Naive thymus-derived CD4-positive, alpha-beta T cell (primary cell): ENCODE measurements at regions of chr12 and their contacts with region 1.

Region 1: DNA sequence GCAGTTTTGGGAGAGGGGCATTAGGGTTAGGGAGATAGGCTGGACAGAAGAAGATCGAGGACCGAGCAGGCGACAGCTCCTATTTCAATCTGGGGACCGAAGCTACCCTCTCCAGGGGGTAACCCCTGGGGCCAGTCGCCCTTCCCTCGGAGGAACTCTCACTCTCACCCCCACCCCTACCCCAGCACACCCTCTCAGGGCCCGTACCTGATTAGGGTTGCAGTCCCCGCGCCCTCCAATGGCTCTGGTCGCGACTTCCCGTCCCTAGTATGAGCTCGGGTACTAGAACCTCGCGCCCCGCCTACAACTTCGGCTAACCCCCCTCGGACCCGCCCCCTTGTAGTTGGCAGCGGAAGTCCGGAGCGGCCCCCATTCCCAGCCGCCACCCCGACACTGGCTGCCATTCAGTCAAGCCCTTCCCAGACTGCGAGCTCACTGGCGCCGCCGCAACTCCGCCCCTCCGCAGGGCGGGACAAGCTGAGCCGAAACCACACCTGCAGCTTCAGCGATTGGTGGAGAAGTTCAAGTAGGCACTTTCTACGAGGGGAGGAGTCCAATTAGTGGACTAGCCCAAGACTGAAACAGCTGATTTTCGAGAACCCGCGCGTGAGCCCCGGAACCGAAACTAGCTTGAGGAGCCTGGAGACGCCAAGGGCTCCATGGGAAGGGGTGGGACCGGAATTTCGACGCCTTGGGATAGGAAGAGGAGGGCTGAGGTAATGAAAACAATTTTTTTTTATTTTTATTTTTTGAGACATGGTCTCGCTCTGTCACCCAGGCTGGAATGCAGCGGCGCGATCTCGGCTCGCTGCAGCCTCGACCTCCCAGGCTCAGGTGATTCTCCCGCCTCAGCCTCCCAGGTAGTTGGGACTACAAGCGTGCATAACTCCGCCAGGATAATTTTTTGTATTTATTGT is at the start of gene STAT2:
- DNase-seq: peak; percentile 94 to 100 (median 99)
- ATAC-seq: peak; percentile 97
- H3K4me3 ChIP-seq: peak within 1 kb of the TSS; percentile 89
- H3K4me3 Mint-ChIP-seq: peak within 1 kb of the TSS; percentile 83 to 99 (median 96)
- H3K27ac ChIP-seq: peak within 1 kb of the TSS; percentile 79
- H3K27ac Mint-ChIP-seq: peak within 1 kb of the TSS; percentile 90 to 98 (median 96)
- H3K4me1 ChIP-seq: peaks cover 16 to 17% of the 10 kb centered on the region in 2 donors
- H3K4me1 Mint-ChIP-seq: peaks cover 14 to 40% (median 27%) of the 10 kb centered on the region in 7 donors
- H3K27me3 ChIP-seq: no peaks in the 10 kb centered on the region
- H3K27me3 Mint-ChIP-seq: no peaks in the 10 kb centered on the region
- total RNA-seq, gene STAT2: 119 to 291 (median 182) TPM

Region 2: DNA sequence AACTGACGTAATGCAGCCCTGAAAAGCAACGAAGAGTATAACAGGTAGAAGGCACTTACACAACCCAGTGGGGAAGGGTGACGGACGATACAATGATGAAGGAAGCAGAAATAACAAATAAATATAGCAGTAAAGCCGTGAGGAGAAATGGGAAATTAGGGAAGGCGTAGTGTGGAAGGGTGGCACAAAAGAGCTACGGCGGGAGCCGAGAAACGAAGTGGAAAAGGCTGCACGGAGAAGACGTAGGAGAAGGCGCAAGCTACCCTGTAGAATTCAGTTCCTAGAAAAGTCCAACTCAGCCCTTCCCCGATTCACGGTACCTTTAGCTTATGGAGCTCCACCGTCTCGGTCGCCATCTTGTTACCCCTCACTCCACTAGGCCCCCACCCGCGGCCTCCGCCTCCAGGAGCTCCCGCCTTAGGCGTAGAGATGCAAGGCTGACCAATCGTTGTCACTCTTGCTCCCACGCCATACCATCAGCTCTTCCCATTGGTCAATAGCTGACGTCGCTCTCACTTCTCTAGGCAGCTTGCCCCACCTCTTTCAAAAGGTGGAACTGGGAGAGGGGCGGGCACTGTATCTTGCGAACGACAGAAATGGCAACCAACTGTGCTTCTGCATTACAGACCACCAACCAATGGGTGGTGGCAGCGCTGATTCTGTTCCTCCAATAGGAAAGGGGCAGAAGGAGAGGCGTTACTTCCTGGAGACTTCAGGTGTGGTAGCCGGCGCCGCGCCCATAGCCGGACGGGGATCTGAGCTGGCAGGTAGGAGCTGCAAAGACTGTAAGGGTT is 542.6 kb before region 1 on chr12 and contains the starts of genes ORMDL2 and SARNP:
- CTCF ChIA-PET with region 1: no interaction called
- POLR2A ChIA-PET with region 1: no interaction called
- intact Hi-C with region 1: loop called in 1 of 2 experiments (anchors 1 kb)
- DNase-seq: peak; percentile 81 to 99 (median 98)
- ATAC-seq: peak; percentile 96
- H3K4me3 ChIP-seq: peak within 1 kb of the TSS; percentile 94
- H3K4me3 Mint-ChIP-seq: no peak within 1 kb of the TSS
- H3K27ac ChIP-seq: peak within 1 kb of the TSS; percentile 88
- H3K27ac Mint-ChIP-seq: no peak within 1 kb of the TSS
- H3K4me1 ChIP-seq: peaks cover 22 to 41% of the 10 kb centered on the region in 2 donors
- H3K4me1 Mint-ChIP-seq: peaks cover 32 to 45% (median 37%) of the 10 kb centered on the region in 7 donors
- H3K27me3 ChIP-seq: no peaks in the 10 kb centered on the region
- H3K27me3 Mint-ChIP-seq: no peaks in the 10 kb centered on the region
- total RNA-seq, gene ORMDL2: 12.3 to 67.3 (median 40.5) TPM
- total RNA-seq, gene SARNP: 28.0 to 73.0 (median 41.7) TPM

Region 3: GRCh38 chr12:56158029-56158925 is 201.8 kb before region 1 on chr12 and contains the start of gene MYL6:
- CTCF ChIA-PET with region 1: no interaction called
- POLR2A ChIA-PET with region 1: no interaction called
- intact Hi-C with region 1: loop called in 1 of 2 experiments (anchors 2 kb)
- DNase-seq: peak; percentile 58 to 97 (median 89)
- ATAC-seq: peak; percentile 91
- H3K4me3 ChIP-seq: peak within 1 kb of the TSS; percentile 89
- H3K4me3 Mint-ChIP-seq: peak within 1 kb of the TSS; percentile 94 to 99 (median 96)
- H3K27ac ChIP-seq: peak within 1 kb of the TSS; percentile 98
- H3K27ac Mint-ChIP-seq: peak within 1 kb of the TSS; percentile 88 to 99 (median 97)
- H3K4me1 ChIP-seq: peaks cover 24 to 26% of the 10 kb centered on the region in 2 donors
- H3K4me1 Mint-ChIP-seq: peaks cover 31 to 59% (median 54%) of the 10 kb centered on the region in 7 donors
- H3K27me3 ChIP-seq: no peaks in the 10 kb centered on the region
- H3K27me3 Mint-ChIP-seq: no peaks in the 10 kb centered on the region
- total RNA-seq, gene MYL6: 428 to 1,509 (median 467) TPM

Region 4: DNA sequence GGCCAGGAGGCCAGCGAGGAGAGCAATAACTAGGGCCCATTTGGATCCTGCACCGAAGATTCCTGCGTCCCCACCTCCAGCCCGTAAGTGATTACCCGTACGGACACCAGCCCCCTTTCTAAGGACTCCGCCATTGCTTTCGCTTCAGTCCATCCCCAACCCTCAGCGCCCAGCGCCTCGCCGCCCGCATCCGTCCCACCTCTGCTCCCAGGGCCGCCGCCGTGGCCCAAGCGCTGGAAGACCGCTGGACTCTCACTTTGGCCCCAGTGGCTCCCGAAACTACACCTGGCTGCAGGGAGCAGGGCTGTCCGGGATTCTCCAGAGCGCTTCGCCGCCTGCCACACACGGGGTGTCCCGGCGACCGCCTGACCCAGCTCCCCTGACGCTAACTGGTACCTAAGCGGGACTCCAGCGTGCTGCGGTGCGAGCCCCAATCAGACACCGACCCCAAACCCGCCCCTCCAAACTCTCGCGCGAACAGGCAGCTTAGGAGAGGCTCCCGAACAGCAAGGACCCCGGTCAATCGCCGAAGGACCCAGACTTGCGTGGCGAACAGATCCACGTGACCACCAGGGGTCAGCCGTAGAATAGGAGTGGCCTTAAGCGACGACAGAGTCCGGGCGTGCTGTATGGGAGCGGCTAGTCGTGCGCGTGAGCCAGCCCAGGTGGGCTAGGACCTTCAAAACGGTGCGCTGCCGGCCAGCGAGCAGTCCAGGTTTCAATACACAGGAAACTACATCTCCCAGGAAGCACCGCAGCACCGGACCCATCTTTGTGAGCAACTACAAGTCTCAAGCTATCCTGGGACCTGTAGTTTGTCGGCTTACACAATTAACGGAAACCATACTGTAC is 44.3 kb before region 1 on chr12 and contains the start of gene CNPY2:
- CTCF ChIA-PET with region 1: interaction called, 6 read pairs
- POLR2A ChIA-PET with region 1: interaction called, 49 read pairs
- intact Hi-C with region 1: loop called (anchors 1 kb)
- DNase-seq: peak; percentile 83 to 94 (median 92)
- ATAC-seq: peak; percentile 93
- H3K4me3 ChIP-seq: peak within 1 kb of the TSS; percentile 100
- H3K4me3 Mint-ChIP-seq: peak within 1 kb of the TSS; percentile 96 to 99 (median 98)
- H3K27ac ChIP-seq: peak within 1 kb of the TSS; percentile 97
- H3K27ac Mint-ChIP-seq: peak within 1 kb of the TSS; percentile 93 to 99 (median 99)
- H3K4me1 ChIP-seq: peaks cover 13 to 16% of the 10 kb centered on the region in 2 donors
- H3K4me1 Mint-ChIP-seq: peaks cover 5 to 23% (median 13%) of the 10 kb centered on the region in 7 donors
- H3K27me3 ChIP-seq: no peaks in the 10 kb centered on the region
- H3K27me3 Mint-ChIP-seq: no peaks in the 10 kb centered on the region
- total RNA-seq, gene CNPY2: 48.4 to 134 (median 87.6) TPM

Region 5: GRCh38 chr12:56448860-56449621 is 88.9 kb after region 1 on chr12 and contains the start of gene TIMELESS:
- CTCF ChIA-PET with region 1: interaction called, 4 read pairs
- POLR2A ChIA-PET with region 1: interaction called, 17 read pairs
- intact Hi-C with region 1: loop called (anchors 1 to 2 kb)
- DNase-seq: peak; percentile 74 to 89 (median 85)
- ATAC-seq: peak; percentile 98
- H3K4me3 ChIP-seq: peak within 1 kb of the TSS; percentile 97
- H3K4me3 Mint-ChIP-seq: peak within 1 kb of the TSS; percentile 77 to 94 (median 92)
- H3K27ac ChIP-seq: peak within 1 kb of the TSS; percentile 74
- H3K27ac Mint-ChIP-seq: peak within 1 kb of the TSS; percentile 86 to 98 (median 93)
- H3K4me1 ChIP-seq: peaks cover 0 to 7% of the 10 kb centered on the region in 2 donors
- H3K4me1 Mint-ChIP-seq: peaks cover 12 to 36% (median 24%) of the 10 kb centered on the region in 7 donors
- H3K27me3 ChIP-seq: no peaks in the 10 kb centered on the region
- H3K27me3 Mint-ChIP-seq: no peaks in the 10 kb centered on the region
- total RNA-seq, gene TIMELESS: 4.4 to 42.3 (median 5.4) TPM

Region 6: DNA sequence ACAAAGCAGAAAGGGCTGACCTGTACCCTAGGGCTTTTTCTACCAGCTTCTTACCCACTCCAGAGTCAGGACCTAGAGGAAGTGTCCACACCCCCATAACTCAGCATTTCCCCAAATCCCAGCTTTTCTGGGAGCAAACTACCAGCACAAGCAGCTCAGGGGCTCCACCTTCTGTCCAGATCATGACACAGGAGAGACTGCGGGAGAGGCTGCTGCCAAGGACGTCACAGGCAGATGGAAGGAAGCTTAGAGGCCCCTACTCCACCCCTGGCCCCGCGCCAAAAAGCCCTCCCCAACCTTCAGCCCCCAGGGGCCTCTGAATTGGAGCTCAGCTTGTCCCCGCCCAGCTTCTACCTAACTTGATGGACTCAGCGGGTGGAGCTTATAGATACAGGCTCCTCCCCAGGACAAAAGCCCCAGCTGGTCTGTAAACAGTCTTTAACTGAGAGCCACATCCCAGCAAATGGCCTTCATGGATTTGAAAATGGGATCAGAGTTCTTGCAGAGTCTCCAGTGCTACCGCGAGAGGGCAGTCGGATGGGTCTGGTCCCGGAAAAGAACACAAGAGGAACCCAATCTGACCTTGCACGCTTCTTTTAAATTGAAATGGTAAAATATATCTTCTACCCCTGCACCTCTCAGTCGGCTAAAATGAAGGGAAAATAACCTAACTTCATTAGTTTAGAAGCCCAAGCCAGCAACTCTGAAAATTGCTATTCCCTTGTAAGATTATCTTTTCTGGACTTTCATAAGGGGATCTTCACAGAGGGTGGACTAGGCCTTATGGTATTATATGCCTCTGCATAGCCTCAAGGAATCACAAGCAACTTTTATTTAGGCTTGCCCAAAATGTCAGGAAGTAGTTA is 276.8 kb after region 1 on chr12:
- CTCF ChIA-PET with region 1: no interaction called
- POLR2A ChIA-PET with region 1: no interaction called
- intact Hi-C with region 1: loop called (anchors 1 to 2 kb)
- DNase-seq: peak; percentile 86 to 99 (median 94)
- ATAC-seq: peak; percentile 83
- H3K4me3 ChIP-seq: peak overlapping the region; percentile 73
- H3K4me3 Mint-ChIP-seq: peak overlapping the region; percentile 87 to 100 (median 96)
- H3K27ac ChIP-seq: peak overlapping the region; percentile 83
- H3K27ac Mint-ChIP-seq: peak overlapping the region; percentile 89 to 99 (median 97)
- H3K4me1 ChIP-seq: peaks cover 27 to 36% of the 10 kb centered on the region in 2 donors
- H3K4me1 Mint-ChIP-seq: peaks cover 28 to 69% (median 57%) of the 10 kb centered on the region in 7 donors
- H3K27me3 ChIP-seq: no peaks in the 10 kb centered on the region
- H3K27me3 Mint-ChIP-seq: no peaks in the 10 kb centered on the region

Region 7: DNA sequence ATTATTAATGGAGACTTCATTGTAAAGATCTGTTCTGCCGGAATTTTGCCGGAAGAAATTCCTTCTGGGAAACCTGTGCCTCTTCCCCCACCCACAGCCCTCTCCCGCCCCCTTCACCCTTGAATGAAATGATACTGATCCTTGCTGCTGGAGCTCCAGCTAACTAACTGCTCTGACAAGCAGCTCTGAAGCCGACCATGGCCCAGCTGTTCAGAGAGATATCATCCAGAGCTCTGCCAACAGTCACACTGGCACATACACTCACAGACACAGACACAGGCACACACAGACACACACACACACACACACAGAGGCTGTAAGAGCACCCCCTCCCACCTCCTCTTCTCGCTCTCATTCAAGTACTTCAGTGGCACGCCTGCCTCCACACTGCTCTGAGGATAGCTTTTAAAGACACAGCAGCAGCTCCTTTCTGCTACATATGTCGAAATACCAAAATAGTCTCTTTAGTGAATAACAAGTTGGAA is 982.1 kb after region 1 on chr12:
- CTCF ChIA-PET with region 1: no interaction called
- POLR2A ChIA-PET with region 1: no interaction called
- intact Hi-C with region 1: no loop called
- DNase-seq: no peak
- ATAC-seq: no peak
- H3K4me3 ChIP-seq: no peak overlapping the region
- H3K4me3 Mint-ChIP-seq: no peak overlapping the region
- H3K27ac ChIP-seq: no peak overlapping the region
- H3K27ac Mint-ChIP-seq: peak overlapping the region in 2 of 9 donors; percentile 12 to 48
- H3K4me1 ChIP-seq: no peaks in the 10 kb centered on the region
- H3K4me1 Mint-ChIP-seq: peaks cover 4 to 39% (median 29%) of the 10 kb centered on the region in 7 donors
- H3K27me3 ChIP-seq: no peaks in the 10 kb centered on the region
- H3K27me3 Mint-ChIP-seq: no peaks in the 10 kb centered on the region